T-cell (primary cell): ENCODE measurements at regions of chr3 and their contacts with region 1.

Region 1: GRCh38 chr3:67947808-67948508 is 293.5 kb upstream of the SUCLG2 start:
- DNase-seq: peak; percentile 55 to 91 (median 80)
- ATAC-seq: peak; percentile 97 to 99 (median 99)
- H3K4me3 ChIP-seq: peak overlapping the region in 1 of 2 donors; percentile 30
- H3K4me3 Mint-ChIP-seq: peak overlapping the region; percentile 74 to 82 (median 79)
- H3K27ac ChIP-seq: peak overlapping the region; percentile 25
- H3K27ac Mint-ChIP-seq: peak overlapping the region; percentile 91 to 93
- H3K4me1 ChIP-seq: peaks cover 0 to 12% of the 10 kb centered on the region in 2 experiments
- H3K4me1 Mint-ChIP-seq: peaks cover 32 to 37% (median 34%) of the 10 kb centered on the region in 3 donors
- H3K27me3 ChIP-seq: no peaks in the 10 kb centered on the region
- H3K27me3 Mint-ChIP-seq: no peaks in the 10 kb centered on the region

Region 2: DNA sequence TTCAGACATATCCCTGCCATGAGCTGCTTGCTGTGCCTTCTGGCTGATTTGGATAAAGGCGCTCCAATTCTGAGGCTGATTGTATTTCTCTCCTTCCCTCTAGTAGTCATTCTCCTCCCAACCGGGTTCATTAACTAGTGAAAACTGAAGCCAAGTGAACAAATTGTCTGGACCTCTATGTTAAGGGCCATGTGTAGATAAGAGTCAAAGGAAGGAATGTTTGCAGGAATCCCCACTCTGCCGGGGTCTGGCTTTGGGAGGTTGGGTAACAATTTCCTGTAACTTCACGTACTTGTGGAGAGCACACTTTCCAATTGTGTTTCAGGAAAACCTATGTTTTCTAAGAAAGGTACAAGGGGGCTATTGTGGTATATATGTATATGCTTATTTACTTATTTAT is 255.3 kb before region 1 on chr3:
- CTCF ChIA-PET with region 1: no interaction called
- POLR2A ChIA-PET with region 1: no interaction called
- DNase-seq: no peak
- ATAC-seq: no peak
- H3K4me3 ChIP-seq: no peak overlapping the region
- H3K4me3 Mint-ChIP-seq: no peak overlapping the region
- H3K27ac ChIP-seq: no peak overlapping the region
- H3K27ac Mint-ChIP-seq: no peak overlapping the region
- H3K4me1 ChIP-seq: no peaks in the 10 kb centered on the region
- H3K4me1 Mint-ChIP-seq: peaks cover 0 to 16% (median 2%) of the 10 kb centered on the region in 3 donors
- H3K27me3 ChIP-seq: no peaks in the 10 kb centered on the region
- H3K27me3 Mint-ChIP-seq: no peaks in the 10 kb centered on the region

Region 3: DNA sequence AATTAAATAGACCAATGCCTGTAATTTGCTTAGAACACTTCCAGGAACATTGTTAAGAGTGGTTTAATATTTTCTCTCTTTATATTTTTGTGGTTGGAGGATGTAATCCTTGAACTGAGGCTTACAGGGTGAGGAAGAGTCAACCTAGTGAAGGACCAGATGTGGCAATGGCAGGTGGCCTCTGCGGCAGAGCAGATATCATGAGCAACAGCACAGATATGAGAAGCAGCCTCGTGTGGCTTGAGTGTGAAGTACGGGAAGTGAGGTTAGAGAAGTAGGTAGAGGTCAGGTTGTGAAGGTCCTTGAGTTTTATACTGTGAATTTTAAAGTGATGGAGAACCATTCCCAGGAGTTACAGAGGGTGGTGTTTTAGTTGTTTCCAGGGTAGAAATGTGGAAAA is 124.1 kb after region 1 on chr3:
- CTCF ChIA-PET with region 1: no interaction called
- POLR2A ChIA-PET with region 1: interaction called in 1 of 2 experiments, 21 read pairs
- DNase-seq: peak in 2 of 35 experiments; percentile 5 to 8
- ATAC-seq: no peak
- H3K4me3 ChIP-seq: no peak overlapping the region
- H3K4me3 Mint-ChIP-seq: no peak overlapping the region
- H3K27ac ChIP-seq: no peak overlapping the region
- H3K27ac Mint-ChIP-seq: no peak overlapping the region
- H3K4me1 ChIP-seq: no peaks in the 10 kb centered on the region
- H3K4me1 Mint-ChIP-seq: peaks cover 14 to 35% (median 26%) of the 10 kb centered on the region in 3 donors
- H3K27me3 ChIP-seq: no peaks in the 10 kb centered on the region
- H3K27me3 Mint-ChIP-seq: no peaks in the 10 kb centered on the region

Region 4: DNA sequence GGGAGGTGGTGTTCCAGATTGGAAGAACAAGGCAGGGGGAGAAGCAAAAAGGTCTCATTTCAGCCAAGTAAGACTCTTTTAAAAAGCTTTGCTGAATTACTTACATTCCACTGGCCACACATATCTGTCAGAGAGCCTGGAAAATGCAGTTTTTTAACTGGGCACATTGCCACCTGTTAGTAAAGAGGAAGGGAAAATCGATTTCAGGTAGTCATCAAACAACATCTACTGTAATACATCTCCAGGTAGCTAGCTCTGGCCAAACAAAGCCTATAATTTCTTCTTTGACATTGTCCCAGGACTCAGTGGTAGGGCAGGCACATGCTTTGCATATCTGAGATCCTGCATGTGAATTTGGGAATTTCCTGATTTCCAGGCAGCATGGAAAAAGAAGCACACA is 187.1 kb after region 1 on chr3:
- CTCF ChIA-PET with region 1: no interaction called
- POLR2A ChIA-PET with region 1: no interaction called
- DNase-seq: no peak
- ATAC-seq: no peak
- H3K4me3 ChIP-seq: no peak overlapping the region
- H3K4me3 Mint-ChIP-seq: no peak overlapping the region
- H3K27ac ChIP-seq: no peak overlapping the region
- H3K27ac Mint-ChIP-seq: no peak overlapping the region
- H3K4me1 ChIP-seq: no peaks in the 10 kb centered on the region
- H3K4me1 Mint-ChIP-seq: peaks cover 0 to 6% (median 4%) of the 10 kb centered on the region in 3 donors
- H3K27me3 ChIP-seq: no peaks in the 10 kb centered on the region
- H3K27me3 Mint-ChIP-seq: peaks cover 0 to 5% of the 10 kb centered on the region in 2 donors